Activated CD4-positive, alpha-beta memory T cell treated with anti-CD3 and anti-CD28 coated beads for 36 hours (primary cell): ENCODE measurements at regions of chr5 and their contacts with region 1.

Region 1: DNA sequence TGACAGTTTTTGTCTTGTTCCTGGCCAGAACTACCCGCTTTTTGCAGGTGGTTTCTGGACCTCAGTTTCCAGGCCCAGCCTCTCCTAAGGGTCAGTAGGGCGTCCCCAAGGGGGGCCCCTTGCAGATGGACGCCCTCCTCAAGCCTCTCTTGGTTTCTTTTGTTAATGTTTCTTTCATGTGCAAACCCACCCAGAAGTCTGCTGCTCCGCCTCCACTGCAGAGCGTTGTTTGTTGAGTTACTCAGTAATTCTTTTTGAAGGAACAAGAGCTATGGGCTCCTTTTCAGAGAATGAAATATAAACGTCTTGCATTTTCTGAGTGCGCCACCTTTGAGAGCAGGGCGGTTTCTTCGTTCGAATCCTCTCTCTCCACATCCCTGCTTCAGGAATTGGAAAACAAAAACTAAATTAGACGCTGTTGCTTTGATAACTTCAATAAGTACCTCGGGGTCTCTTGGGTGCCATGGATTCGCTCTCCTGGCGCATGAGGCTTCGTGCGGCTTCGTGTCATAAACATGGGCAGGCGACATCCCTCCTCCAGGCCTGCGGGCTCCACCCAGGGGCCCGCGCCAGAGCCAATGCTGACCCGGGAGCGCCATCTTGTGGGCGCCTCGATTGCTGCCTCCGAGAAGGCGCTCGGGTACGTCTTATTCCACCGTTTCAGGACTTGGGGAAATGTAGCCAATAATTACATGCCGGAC is 38.3 kb upstream of the CKMT2 start:
- DNase-seq: peak; percentile 88
- H3K4me3 Mint-ChIP-seq: peak overlapping the region; percentile 0
- H3K27ac Mint-ChIP-seq: no peak overlapping the region
- H3K4me1 Mint-ChIP-seq: peaks cover 7% of the 10 kb centered on the region
- H3K27me3 Mint-ChIP-seq: no peaks in the 10 kb centered on the region

Region 2: GRCh38 chr5:80346055-80346454 is 848.7 kb before region 1 on chr5:
- CTCF ChIA-PET with region 1: interaction called, 3 read pairs
- POLR2A ChIA-PET with region 1: no interaction called
- intact Hi-C with region 1: loop called (anchors 10 kb)
- DNase-seq: peak; percentile 52
- H3K4me3 Mint-ChIP-seq: no peak overlapping the region
- H3K27ac Mint-ChIP-seq: no peak overlapping the region
- H3K4me1 Mint-ChIP-seq: no peaks in the 10 kb centered on the region
- H3K27me3 Mint-ChIP-seq: peaks cover 6% of the 10 kb centered on the region

Region 3: GRCh38 chr5:80481019-80481893 is 713.5 kb before region 1 on chr5:
- CTCF ChIA-PET with region 1: interaction called, 10 read pairs
- POLR2A ChIA-PET with region 1: no interaction called
- intact Hi-C with region 1: no loop called
- DNase-seq: peak; percentile 48
- H3K4me3 Mint-ChIP-seq: no peak overlapping the region
- H3K27ac Mint-ChIP-seq: peak overlapping the region; percentile 25
- H3K4me1 Mint-ChIP-seq: no peaks in the 10 kb centered on the region
- H3K27me3 Mint-ChIP-seq: no peaks in the 10 kb centered on the region

Region 4: GRCh38 chr5:80686757-80687156 is 508.0 kb before region 1 on chr5:
- CTCF ChIA-PET with region 1: interaction called, 5 read pairs
- POLR2A ChIA-PET with region 1: no interaction called
- intact Hi-C with region 1: loop called (anchors 2 kb)
- DNase-seq: no peak
- H3K4me3 Mint-ChIP-seq: no peak overlapping the region
- H3K27ac Mint-ChIP-seq: no peak overlapping the region
- H3K4me1 Mint-ChIP-seq: peaks cover 17% of the 10 kb centered on the region
- H3K27me3 Mint-ChIP-seq: no peaks in the 10 kb centered on the region

Region 5: GRCh38 chr5:81183811-81184748 is 10.7 kb before region 1 on chr5:
- CTCF ChIA-PET with region 1: interaction called, 12 read pairs
- POLR2A ChIA-PET with region 1: no interaction called
- intact Hi-C with region 1: no loop called
- DNase-seq: no peak
- H3K4me3 Mint-ChIP-seq: no peak overlapping the region
- H3K27ac Mint-ChIP-seq: no peak overlapping the region
- H3K4me1 Mint-ChIP-seq: peaks cover 16% of the 10 kb centered on the region
- H3K27me3 Mint-ChIP-seq: no peaks in the 10 kb centered on the region

Region 6: DNA sequence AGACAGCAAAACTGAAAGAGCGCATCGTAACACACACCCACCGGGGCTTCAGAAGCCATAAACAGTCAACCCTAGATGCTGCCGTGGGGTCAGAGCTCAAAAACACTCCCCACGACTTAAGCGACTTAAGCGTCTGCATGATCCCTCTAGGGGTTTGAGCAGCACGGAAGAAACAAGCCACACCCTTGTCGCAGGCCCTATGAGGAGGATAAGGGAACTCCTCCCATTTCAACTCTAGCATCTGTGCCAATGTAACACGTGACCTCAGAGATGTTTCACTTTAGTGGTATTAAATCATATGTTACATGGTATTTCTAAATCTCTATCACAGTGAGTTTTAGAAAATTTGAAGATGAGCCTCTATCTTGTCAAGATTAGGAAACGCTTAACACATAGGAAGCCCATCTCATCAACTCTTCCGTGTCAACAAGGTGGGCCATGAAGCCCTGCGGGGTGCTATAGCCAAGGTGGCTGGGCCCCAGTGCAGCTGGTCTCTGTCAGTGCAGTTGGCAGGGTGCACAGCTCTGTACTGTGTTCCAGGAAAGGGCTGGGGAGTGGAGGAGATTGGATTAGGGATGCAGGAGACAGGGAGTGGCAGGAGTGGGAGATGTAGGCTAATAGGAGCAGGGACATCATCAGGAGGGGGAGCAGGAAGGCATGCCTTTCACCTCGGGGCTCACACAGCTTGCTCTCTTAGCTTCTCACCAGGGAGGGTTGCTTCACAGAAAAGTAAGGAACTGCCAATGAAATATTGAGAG is 139.7 kb after region 1 on chr5:
- CTCF ChIA-PET with region 1: no interaction called
- POLR2A ChIA-PET with region 1: no interaction called
- intact Hi-C with region 1: no loop called
- DNase-seq: no peak
- H3K4me3 Mint-ChIP-seq: no peak overlapping the region
- H3K27ac Mint-ChIP-seq: no peak overlapping the region
- H3K4me1 Mint-ChIP-seq: no peaks in the 10 kb centered on the region
- H3K27me3 Mint-ChIP-seq: no peaks in the 10 kb centered on the region